Posterior cingulate gyrus (tissue), 11 donors: ENCODE measurements at regions of chr12 and their contacts with region 1.

Region 1: DNA sequence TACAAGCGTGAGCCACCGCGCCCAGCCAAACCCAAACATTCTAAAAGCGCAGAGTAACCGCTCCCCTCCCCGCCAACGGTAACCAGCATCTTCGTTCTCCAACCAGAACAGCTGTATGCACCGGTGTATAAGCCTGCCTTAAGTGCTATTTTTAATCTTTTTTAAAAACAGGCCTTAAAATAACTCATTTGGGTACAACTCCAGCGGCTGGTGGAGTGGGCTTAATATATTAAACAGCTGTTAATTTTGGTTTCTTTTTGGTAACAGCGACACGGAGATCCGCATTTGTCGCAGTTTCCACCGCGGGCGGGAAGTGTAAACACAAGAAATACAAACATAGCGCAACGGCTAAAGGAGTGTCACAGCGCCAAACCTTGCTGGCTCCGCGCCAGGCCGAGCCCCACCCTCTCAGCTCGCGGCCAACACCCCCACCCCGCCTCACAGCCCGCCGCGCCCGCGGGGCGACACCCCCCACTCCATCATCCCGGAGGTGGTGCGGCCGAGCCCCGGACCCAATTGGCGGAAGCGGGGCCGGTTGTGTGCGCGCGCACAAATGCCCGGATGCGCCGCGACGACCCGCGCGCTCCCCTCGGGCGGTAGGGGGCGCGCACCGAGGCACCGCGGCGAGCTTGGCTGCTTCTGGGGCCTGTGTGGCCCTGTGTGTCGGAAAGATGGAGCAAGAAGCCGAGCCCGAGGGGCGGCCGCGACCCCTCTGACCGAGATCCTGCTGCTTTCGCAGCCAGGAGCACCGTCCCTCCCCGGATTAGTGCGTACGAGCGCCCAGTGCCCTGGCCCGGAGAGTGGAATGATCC is at the start of gene MDM2:
- DNase-seq: peak; percentile 81 to 98 (median 88)

Region 2: DNA sequence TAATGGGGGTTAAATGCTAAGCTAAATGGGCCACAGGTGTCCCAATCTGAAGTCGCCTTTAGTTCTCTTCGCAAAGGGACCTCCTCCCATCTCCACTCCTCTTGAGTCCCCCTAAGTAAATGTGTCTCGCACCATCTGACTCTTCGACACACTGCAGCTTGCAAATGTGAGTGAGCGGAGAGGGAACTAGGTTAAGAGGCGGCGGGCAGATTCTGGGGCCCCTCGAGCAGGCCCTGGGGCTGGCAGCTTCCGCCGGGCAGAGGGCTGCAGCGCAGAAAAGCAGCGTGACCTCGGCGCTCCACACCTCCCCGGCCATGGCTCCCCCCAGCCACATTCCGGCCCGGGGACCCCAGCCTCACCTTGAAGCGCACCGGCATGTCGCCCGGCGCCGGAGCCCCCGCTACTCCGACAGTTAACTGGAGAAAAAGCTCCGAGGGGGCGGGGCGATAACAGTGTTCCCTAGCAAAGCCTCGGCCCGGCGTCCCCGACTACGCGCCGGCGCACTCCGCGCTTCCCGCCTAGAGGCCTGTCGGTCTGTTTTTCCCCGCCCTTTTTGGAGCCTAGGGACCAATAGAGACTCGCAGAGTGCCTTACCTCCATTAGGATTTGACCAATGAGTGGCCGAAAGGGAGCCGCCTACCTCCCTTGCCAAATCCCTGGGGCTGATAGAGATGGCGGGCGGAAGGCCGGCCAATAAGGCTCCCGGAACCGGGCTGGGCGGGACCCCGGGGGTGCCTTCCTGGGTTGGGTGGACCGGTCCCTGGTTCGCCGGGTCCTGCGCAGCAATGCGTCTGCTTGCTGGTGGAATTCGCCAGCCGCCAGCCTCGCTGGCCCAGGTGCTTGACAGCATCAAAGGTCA is 475.7 kb before region 1 on chr12 and contains the start of gene MDM1:
- intact Hi-C with region 1: loop called (anchors 10 kb)
- DNase-seq: peak; percentile 93 to 100 (median 97)

Region 3: GRCh38 chr12:68610370-68611093 is 197.2 kb before region 1 on chr12 and contains the start of gene RAP1B:
- intact Hi-C with region 1: loop called (anchors 5 kb)
- DNase-seq: peak; percentile 83 to 99 (median 90)

Region 4: DNA sequence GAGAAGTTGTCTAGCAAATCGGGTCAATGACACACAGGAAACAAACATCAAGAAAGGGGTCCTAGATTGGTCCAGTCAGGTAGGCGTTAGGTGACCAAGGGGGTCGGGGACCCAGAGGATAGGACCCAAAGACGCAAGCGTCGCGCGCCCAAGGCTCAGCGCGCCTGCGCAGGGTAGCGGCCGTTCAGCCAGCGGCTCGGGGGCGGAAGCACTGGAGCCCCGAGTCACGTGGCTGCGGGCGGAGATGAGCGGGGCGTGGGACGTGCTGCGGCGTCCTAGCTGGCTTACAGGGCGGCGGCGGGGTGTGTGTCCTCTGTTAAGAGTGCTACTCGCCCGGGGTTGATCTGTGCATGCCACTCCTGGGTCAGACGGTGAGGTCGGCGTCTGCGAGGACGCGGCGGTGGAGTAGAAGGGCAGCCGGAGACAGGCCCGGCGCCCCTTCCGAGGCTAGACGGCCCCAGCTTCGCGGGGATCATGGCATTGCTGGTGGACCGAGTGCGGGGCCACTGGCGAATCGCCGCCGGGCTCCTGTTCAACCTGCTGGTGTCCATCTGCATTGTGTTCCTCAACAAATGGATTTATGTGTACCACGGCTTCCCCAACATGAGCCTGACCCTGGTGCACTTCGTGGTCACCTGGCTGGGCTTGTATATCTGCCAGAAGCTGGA is 61.7 kb before region 1 on chr12 and contains the start of gene SLC35E3:
- intact Hi-C with region 1: loop called (anchors 1 kb)
- DNase-seq: peak; percentile 90 to 99 (median 94)

Region 5: GRCh38 chr12:68759852-68760251 is 47.9 kb before region 1 on chr12:
- intact Hi-C with region 1: no loop called
- DNase-seq: no peak